Activated CD4-positive, alpha-beta T cell treated with anti-CD3 and anti-CD28 coated beads, Interleukin-2, amount 10 ng/mL, durations not matched to agents 24 days and 14 days (primary cell): ENCODE measurements at regions of chr6 and their contacts with region 1.

Region 1: DNA sequence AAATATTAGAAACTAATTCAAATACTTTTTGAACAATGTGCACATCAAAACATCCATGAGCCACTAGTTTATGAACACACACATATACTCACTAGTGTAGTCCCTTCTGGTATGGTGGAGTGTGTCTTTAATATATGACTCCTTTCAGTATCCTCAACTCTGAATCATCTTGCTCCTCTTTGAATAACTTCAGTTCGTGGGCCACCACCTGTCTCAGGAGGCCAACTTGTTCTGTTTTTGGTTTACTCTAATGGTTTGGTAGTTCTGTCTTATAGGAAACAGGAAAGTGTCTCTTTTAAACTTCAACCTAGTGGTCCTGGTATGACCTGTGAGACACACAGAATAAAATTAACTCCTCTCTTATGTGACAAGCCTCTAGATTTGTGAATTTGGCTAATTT is 55.6 kb downstream of the ZNF292 start:
- DNase-seq: no peak
- H3K4me3 Mint-ChIP-seq: no peak overlapping the region
- H3K27ac Mint-ChIP-seq: no peak overlapping the region
- H3K4me1 Mint-ChIP-seq: peaks cover 48% of the 10 kb centered on the region
- H3K27me3 Mint-ChIP-seq: no peaks in the 10 kb centered on the region

Region 2: DNA sequence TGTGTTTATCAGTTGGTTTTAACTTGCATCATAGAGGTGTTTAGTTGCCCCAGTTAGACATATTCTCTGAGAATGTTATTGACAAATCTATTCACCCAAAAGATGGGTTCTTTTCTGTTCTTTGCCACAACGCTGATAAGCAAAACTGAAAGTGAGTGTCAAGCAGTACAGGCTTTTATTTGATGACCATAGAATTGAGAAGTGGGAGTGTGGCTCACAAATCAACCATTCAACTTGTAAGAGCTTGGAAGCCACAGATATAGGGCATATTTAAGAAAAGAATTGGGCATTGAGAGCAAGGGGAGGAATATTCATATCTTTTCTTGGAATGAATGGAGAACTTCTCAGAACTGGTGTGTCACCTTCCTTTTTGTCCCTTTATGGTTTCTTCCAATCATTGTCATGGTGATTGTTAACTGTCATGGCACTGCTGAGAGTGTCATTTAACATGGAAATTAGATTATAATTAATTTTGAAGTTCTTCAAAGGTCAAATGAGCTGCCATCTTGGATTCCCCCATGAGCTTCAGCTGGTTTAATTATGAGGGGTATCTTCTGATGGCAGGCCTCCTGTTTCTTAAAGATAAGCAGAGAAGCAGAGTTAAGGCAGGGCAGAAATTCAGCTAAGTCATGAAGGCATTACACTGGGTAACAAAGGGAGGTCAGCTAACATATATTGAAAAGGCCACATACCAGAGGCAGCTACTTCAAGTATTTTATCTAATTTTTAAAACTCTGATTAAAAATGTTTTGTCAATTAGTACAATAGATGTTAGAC is 527.7 kb before region 1 on chr6:
- intact Hi-C with region 1: no loop called
- DNase-seq: no peak
- H3K4me3 Mint-ChIP-seq: no peak overlapping the region
- H3K27ac Mint-ChIP-seq: no peak overlapping the region
- H3K4me1 Mint-ChIP-seq: no peaks in the 10 kb centered on the region
- H3K27me3 Mint-ChIP-seq: no peaks in the 10 kb centered on the region

Region 3: GRCh38 chr6:87174078-87174579 is 36.9 kb before region 1 on chr6:
- intact Hi-C with region 1: loop called (anchors 5 kb)
- DNase-seq: no peak
- H3K4me3 Mint-ChIP-seq: no peak overlapping the region
- H3K27ac Mint-ChIP-seq: peak overlapping the region; percentile 54
- H3K4me1 Mint-ChIP-seq: peaks cover 50% of the 10 kb centered on the region
- H3K27me3 Mint-ChIP-seq: no peaks in the 10 kb centered on the region

Region 4: GRCh38 chr6:87182321-87182720 is 28.7 kb before region 1 on chr6:
- intact Hi-C with region 1: loop called (anchors 1 kb)
- DNase-seq: no peak
- H3K4me3 Mint-ChIP-seq: peak overlapping the region; percentile 43
- H3K27ac Mint-ChIP-seq: peak overlapping the region; percentile 89
- H3K4me1 Mint-ChIP-seq: peaks cover 48% of the 10 kb centered on the region
- H3K27me3 Mint-ChIP-seq: no peaks in the 10 kb centered on the region

Region 5: DNA sequence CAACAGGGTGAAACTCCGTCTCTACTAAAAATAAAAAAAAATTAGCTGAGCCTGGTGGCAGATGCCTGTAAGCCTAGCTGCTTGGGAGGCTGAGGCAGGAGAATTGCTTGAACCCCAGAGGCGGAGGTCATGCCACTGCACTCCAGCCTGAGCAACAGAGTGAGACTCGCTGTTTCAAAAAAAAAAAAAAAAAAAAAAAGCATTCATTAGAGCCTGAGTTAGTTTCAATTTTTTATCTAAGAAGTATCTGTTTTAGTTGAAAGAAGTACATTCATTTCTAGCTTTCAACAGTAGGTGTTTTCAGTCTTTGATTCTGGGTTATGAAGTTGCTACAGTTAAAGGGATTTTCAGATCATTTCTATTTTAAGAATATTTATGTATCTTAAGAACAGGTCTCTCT is 13.4 kb before region 1 on chr6:
- intact Hi-C with region 1: loop called (anchors 1 kb)
- DNase-seq: no peak
- H3K4me3 Mint-ChIP-seq: no peak overlapping the region
- H3K27ac Mint-ChIP-seq: no peak overlapping the region
- H3K4me1 Mint-ChIP-seq: peaks cover 43% of the 10 kb centered on the region
- H3K27me3 Mint-ChIP-seq: no peaks in the 10 kb centered on the region

Region 6: DNA sequence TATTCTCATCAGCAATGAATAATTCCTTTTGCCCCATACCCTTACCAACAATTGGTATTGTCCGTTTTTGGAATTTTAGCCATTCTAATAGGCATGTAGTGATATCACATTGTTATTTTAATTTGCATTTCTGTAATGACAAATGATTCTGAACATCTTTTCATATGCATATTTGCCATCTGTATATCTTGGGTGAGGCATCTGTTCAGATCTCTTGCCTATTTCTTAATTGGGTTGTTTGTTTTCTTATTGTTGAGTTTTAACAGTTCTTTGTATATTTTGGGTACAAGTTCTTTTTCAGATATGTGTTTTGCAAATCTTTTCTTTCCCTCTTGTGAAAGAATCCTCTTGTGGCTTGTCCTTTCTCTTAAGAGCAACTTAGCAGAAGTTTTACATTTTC is 14.0 kb after region 1 on chr6:
- intact Hi-C with region 1: loop called (anchors 1 kb)
- DNase-seq: no peak
- H3K4me3 Mint-ChIP-seq: no peak overlapping the region
- H3K27ac Mint-ChIP-seq: no peak overlapping the region
- H3K4me1 Mint-ChIP-seq: peaks cover 8% of the 10 kb centered on the region
- H3K27me3 Mint-ChIP-seq: no peaks in the 10 kb centered on the region

Region 7: DNA sequence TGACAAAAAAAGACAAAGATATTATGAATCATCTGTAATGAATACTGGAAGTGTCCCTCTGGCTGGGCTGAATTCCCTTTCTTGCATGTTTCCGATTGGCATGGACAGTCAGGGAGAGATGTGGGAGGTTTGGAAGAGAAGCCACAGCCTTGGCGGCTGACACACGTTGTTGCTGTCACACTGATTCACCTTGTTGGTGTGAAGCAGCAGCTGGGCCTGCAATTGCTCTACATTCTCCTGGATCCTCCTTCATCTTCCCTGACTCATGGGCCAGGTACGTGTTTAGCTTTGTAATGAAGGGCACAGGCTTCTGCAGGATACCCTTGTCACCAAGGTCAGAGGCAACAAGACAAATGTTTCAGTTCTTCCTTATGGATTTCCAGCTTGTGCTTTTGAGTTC is 98.0 kb after region 1 on chr6:
- intact Hi-C with region 1: no loop called
- DNase-seq: no peak
- H3K4me3 Mint-ChIP-seq: no peak overlapping the region
- H3K27ac Mint-ChIP-seq: no peak overlapping the region
- H3K4me1 Mint-ChIP-seq: no peaks in the 10 kb centered on the region
- H3K27me3 Mint-ChIP-seq: peaks cover 18% of the 10 kb centered on the region